OCI-LY7 (cell line): ENCODE measurements at regions of chr17 and their contacts with region 1.

Region 1: DNA sequence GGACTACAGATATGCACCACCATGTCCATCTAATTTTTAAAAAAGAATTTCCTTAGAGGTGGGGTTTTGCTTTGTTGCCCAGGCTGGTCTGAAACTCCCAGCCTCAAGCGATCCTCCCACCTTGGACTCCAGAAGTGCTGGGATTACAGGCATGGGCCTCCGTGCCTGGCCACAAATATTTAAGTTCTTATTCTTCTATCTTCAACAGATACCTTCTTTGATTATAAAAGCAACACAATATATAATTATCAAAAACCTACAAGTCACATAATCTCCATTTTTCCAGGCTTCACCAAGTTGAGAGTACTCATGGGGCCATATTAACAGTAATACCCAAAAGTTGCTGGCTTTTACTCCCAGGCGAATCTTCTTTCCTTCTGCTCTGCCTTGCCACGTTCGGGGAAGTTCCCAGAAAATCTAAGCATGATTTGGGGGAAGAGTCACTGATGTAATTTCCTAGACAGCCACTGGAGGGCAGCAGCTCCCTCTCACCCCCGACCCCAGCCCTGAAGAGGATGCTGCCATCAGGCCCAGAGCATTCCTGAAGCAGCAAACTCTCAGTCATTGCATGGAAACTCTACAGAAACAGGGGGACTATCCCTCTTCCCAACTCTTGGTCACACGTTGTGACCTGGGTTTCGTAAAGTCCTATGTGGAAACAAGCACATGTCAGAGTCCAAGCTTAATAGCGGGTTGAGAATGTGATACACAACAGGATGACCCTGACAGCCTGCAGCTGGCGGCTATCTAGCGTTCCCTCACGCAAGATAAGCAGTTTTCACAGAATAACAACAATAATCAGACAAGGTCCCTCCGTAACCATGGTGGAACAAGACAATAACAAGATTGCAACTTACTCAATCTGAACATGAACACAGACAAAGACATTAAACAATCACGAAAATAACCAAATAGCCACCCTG is 43.9 kb upstream of the DHX40 start:
- DNase-seq: peak; percentile 60
- H3K4me3 ChIP-seq: no peak overlapping the region
- H3K27ac ChIP-seq: no peak overlapping the region
- H3K4me1 ChIP-seq: no peaks in the 10 kb centered on the region
- CTCF ChIP-seq: peak; percentile 95

Region 2: GRCh38 chr17:59483860-59484259 is 37.6 kb before region 1 on chr17:
- CTCF ChIA-PET with region 1: no interaction called
- POLR2A ChIA-PET with region 1: no interaction called
- intact Hi-C with region 1: no loop called
- DNase-seq: no peak
- H3K4me3 ChIP-seq: no peak overlapping the region
- H3K27ac ChIP-seq: no peak overlapping the region
- H3K4me1 ChIP-seq: no peaks in the 10 kb centered on the region
- CTCF ChIP-seq: no peak

Region 3: GRCh38 chr17:59746849-59747445 is 225.5 kb after region 1 on chr17:
- CTCF ChIA-PET with region 1: no interaction called
- POLR2A ChIA-PET with region 1: no interaction called
- intact Hi-C with region 1: loop called (anchors 5 kb)
- DNase-seq: peak; percentile 63
- H3K4me3 ChIP-seq: no peak overlapping the region
- H3K27ac ChIP-seq: no peak overlapping the region
- H3K4me1 ChIP-seq: peaks cover 5% of the 10 kb centered on the region
- CTCF ChIP-seq: peak; percentile 95